Cardiac septum (tissue), 1 donor: ENCODE measurements at regions of chr12 and their contacts with region 1.

Region 1: DNA sequence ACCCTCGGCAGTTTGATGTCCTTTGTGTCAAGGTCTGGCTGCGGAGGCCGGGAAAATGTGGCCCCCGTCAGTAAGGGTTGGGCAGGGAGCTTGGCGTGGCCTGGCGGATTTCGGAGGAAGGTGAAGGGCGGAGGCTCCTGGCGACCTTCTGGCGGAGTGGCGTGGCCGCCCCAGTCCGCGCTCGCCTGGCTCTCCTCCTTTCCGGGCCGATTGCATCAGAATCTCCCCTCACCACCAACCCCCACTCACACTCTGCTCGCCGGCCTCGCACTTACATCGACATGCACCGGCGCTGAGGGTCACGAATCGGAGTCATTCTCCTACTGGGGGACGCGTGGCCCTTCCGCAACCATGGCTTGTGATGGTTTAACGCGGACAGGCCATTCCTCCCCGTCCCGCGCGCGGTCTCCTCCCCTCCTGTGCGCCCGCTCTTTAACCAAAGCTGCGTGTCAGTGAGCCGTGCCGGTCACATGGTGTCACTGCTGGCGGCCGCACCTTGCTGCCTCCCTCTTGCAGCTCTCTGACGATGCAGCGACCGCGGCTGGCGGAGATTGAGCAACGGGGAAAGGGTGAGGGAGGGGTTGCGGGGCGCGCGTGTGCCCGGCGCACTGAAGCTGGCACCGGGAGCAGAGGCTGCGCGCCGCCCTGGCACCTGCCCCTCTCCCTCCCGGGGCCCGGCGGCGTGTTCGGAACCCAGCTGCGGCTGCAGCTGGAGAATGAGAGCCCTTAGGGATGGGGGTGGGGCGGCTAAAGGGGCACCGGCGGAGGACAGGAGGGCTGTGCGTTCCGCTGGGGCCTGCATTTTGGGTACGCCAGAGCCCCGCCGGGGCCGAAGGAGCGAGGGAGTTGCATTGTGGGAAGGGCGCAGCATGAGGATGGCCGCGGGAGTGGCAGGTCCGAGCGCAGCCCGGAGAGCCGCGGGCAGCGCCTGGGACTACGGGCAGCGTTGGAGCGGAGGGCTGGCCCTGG is at the start of gene SLC38A1:
- DNase-seq: peak; percentile 94
- total RNA-seq, gene SLC38A1: 64.4 TPM

Region 2: DNA sequence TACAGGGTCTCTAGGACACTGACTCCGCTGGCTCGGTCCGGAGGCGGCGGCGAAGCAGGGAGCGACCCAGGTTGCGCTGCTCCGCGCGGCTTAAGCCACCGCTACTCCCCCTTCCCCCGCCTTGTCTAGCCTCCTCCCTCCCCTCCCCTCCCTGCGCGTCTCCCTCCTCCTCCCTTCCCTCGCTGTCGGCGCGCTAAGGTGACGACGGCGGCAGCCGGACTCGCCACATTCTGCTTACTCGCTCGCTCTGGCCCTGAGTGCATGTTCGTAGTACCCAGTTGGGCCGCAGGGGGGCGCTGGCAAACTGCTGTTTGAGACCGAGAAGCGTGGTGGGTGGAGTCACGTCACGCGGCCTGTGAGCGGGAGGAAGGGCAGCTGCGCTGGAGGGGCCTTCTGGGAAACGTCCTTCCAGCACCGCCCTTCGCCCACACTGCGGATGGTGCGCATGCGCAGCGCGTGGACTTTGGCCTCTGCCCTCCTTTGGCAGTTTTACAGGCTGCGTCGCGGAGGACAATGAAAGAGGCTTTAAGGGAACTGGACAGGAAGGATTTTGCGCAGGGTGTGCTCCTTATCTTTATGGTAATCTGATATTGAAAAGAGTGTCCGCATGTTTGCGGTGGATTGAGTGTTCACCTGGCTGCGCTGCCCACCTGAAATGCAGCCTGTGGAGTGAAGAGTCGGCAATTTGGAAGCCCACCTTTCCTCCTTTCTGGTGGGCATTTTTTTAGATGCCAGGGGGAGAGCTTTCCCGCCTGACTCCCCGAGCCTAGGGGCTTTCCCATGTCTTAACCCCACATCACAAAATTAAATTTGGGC is 278.2 kb before region 1 on chr12 and contains the start of gene SCAF11:
- intact Hi-C with region 1: loop called (anchors 5 kb)
- DNase-seq: peak; percentile 100
- total RNA-seq, gene SCAF11: 109 TPM

Region 3: DNA sequence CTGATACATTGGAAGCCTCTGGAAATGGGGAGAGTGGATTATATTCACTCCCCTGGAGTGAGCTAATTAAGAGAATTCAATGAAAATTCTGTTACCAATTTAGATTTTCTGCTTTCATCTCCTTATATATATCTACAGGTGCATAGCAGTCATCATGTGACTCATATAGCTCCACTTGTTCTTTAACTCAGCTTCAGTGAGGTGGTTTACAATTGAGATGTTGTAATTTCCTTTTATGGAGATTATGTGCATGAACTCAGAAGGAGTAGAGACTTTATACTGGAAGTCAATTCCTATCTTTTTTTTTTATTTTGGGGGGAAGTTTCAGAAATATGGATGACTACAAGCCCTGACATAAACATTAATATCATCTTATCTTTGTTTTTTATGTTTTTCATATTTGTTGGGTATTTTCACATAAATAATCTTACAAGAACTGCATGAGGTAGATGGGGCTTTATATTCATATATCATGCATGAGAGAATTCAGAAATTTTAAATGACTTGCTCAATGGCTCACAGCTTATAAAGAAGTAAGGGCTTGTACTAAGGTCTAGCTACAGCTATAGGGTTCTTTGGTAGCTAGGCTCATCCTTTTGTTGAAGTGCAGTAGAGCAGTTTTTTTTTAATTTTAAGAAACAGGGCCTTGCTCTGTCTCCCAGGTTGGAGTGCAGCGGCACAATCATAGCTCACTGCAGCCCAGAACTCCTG is 186.2 kb before region 1 on chr12:
- intact Hi-C with region 1: no loop called
- DNase-seq: no peak

Region 4: GRCh38 chr12:46209914-46210872 is 58.7 kb before region 1 on chr12:
- intact Hi-C with region 1: loop called (anchors 5 kb)
- DNase-seq: no peak

Region 5: GRCh38 chr12:46227616-46228015 is 41.3 kb before region 1 on chr12:
- intact Hi-C with region 1: no loop called
- DNase-seq: no peak

Region 6: DNA sequence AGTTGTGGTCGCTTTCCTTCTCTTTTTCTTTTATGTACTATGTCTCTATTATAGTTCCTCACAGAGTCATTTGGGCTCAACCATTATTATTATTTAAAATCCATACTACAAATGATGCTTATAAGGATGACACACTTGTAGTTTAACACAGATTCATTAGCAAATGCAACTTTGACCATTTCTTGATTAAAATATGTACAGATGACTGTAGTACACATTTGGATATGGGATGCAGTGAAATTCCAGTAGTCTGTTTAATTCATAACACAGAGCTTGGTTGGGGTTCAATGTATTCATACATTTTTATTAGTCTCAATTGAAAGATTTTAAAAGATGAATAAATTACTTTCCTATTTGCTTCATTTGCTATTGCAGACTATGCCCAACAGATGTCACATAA is 30.1 kb before region 1 on chr12:
- intact Hi-C with region 1: no loop called
- DNase-seq: no peak

Region 7: DNA sequence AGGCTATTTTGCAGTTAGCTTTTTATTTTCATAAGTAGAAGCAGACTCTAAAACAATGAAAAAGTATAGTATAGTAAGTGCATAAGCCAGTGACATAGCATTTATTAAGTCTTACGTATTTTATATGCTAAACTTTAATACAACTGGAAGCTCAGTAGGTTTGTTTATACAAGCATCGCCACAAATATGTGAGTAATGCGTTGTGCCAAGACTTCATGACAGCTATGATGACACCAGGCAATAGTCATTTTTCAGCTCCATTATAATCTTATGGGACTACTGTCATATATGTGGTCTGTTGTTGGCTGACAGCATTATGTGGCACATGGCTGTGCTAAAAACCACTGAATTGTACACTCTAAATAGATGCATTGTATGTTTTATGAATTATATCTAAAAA is 63.4 kb after region 1 on chr12:
- intact Hi-C with region 1: no loop called
- DNase-seq: no peak